IMR-90 (cell line): ENCODE measurements at regions of chr21 and their contacts with region 1.

Region 1: DNA sequence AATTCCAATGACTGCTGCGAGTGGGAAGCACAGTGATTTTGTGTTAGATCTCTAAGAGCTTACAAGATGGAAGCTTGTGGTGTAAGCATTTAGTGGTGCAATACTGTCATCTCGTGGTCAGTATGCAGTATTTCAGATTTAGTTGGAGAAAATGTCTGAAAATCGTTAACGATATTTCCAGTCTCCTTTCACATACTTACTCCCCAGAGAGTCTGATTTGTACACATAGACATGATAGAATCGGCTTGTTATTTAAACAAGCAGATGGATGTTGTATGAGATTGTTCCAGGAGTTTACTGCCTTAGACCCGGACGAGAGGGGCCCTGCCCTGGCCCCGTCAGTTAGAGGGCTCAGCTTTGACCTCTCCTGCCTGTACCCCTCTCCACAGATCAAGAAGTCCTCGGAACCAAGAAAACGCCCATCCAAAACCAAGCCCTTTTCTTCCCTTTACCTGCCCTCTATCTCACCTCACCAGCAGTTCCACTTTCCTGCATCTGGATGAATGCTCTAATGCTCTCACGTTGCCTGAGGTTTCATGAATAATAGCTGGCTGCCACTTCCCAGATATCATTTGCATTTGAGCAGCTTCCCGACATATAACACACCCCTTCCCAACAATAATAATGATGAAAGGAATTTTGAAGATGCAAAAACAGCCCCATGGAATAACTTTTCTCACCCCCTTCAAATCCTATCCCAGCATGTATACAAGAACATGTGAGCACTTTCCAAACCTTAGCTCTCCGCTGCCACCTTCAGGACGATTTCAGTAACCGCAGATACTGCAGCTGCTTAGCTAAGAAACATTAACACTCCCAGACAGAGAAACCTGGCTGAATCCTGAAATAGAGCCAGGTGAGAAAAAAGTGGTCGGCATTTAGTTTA is 247.3 kb downstream of the LTN1 start:
- DNase-seq: peak; percentile 94
- ATAC-seq: peak; percentile 82
- H3K4me3 ChIP-seq: peak overlapping the region; percentile 38; the same call in 1 of the 2 replicates
- H3K27ac ChIP-seq: peak overlapping the region; percentile 93
- H3K4me1 ChIP-seq: peaks cover 6% of the 10 kb centered on the region
- H3K27me3 ChIP-seq: no peaks in the 10 kb centered on the region
- CTCF ChIP-seq: peak; percentile 99
- POLR2A ChIP-seq: peak; percentile 60
- RAD21 ChIP-seq: peak; percentile 100

Region 2: DNA sequence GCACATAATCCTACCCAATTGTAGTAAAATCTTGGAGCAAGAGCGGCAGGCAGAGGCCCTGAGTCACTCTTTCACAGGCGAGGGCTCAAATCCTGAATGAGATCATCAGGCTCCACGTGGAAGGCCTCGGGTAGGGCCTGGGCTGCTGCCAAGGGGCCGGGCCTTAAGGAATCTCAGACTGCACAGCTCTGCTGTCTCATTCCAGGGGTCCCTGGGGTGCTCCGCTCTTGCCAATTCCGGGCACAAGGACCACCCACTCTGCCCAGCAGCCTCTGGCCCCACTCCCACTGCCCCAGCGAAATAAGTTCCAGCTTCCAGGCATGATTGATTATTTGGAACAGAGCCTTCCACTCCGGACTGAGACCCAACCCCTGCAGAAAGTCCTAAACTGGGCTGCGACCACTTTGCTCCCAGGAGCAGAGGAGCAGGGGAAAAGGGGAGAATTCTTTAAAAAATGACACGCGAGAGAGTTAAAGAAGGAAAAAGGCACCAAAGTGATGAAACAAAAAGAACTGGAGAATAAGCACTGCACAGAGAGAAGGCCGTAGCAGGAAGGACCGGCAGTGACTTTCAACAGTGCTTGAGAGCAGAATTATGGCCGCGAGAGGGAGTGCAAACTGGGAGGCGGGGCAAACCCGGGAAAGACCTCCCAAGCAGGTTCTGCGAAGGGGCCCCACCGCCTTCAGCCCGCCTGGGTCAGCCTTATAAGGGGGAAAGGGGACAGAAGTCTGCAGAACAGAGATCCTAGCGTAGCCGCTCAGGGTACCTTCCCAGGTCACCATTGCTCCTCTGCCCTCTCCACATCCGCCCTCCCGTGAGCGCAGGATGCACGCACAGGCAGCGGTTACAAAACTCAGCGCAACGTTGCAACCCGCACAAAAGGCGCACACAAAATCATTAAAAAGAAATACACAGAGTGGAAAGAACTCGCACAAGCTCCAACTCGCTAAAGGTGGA is 1902.1 kb before region 1 on chr21:
- CTCF ChIA-PET with region 1: no interaction called
- POLR2A ChIA-PET with region 1: interaction called, 3 read pairs
- dilution Hi-C with region 1: no loop called
- in situ Hi-C with region 1: loop called (anchors 5 kb)
- intact Hi-C with region 1: no loop called
- DNase-seq: peak; percentile 96
- ATAC-seq: peak; percentile 7
- H3K4me3 ChIP-seq: peak overlapping the region; percentile 97
- H3K27ac ChIP-seq: peak overlapping the region; percentile 89
- H3K4me1 ChIP-seq: peaks cover 6% of the 10 kb centered on the region
- H3K27me3 ChIP-seq: no peaks in the 10 kb centered on the region
- CTCF ChIP-seq: no peak
- POLR2A ChIP-seq: peak; percentile 50; the same call in 1 of the 2 replicates
- RAD21 ChIP-seq: 0 out of 2 replicates have a peak, but pooled peaks have one; percentile 11

Region 3: DNA sequence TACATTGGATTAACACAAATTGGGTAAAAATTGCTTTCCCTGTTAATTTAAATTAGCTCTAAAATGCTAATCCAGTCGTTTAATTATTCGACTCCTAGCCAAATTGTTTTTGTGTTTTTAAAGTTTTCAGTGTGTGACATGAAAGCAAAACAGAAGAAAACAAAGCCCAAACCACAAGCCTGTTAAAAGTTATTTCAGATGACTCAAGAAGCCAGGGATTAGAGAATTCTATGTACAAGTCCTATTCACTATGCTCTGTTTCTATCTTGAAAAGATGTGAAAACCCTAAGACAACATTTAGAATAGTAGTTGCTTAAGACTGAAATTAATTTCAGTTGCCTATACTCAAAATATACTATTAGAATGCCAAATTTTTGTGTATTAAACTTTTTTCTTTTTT is 1483.7 kb before region 1 on chr21:
- CTCF ChIA-PET with region 1: no interaction called
- POLR2A ChIA-PET with region 1: no interaction called
- dilution Hi-C with region 1: no loop called
- in situ Hi-C with region 1: no loop called
- intact Hi-C with region 1: no loop called
- DNase-seq: no peak
- ATAC-seq: no peak
- H3K4me3 ChIP-seq: no peak overlapping the region
- H3K27ac ChIP-seq: no peak overlapping the region
- H3K4me1 ChIP-seq: no peaks in the 10 kb centered on the region
- H3K27me3 ChIP-seq: no peaks in the 10 kb centered on the region
- CTCF ChIP-seq: no peak
- POLR2A ChIP-seq: no peak
- RAD21 ChIP-seq: no peak

Region 4: DNA sequence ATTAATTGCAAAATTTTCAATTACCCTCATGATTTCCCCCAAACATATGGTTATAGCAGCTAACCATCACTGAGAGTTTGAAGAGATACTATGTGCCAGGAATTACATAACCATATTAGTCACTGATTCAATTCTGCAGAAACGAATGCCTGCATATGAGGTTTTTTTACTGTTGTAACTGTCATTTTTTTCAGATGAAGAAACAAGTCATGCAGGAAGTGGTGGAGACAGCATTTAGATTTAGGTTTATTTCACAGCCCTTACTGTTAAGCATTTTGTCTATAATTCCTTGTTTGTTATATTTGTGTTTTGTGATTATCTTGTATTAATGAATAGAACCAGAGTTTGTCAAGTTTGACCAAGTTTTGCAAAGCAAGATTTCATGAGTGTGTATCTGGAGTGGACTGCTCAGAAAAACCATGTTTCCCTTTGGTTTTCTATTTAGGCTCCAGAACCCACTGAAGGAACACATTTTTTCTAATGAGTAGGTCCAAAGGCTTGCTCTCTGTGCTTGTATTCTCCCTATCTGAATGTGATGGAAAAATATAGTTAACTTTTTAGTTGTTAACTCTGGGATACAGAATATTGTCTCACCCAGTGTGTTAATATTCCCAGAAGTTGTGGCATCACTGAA is 1470.0 kb before region 1 on chr21:
- CTCF ChIA-PET with region 1: no interaction called
- POLR2A ChIA-PET with region 1: no interaction called
- dilution Hi-C with region 1: no loop called
- in situ Hi-C with region 1: no loop called
- intact Hi-C with region 1: loop called (anchors 10 kb)
- DNase-seq: peak; percentile 88
- ATAC-seq: peak; percentile 61
- H3K4me3 ChIP-seq: no peak overlapping the region
- H3K27ac ChIP-seq: 0 out of 2 replicates have a peak overlapping the region, but pooled peaks have one; percentile 37
- H3K4me1 ChIP-seq: peaks cover 10% of the 10 kb centered on the region
- H3K27me3 ChIP-seq: no peaks in the 10 kb centered on the region
- CTCF ChIP-seq: no peak
- POLR2A ChIP-seq: no peak
- RAD21 ChIP-seq: no peak

Region 5: DNA sequence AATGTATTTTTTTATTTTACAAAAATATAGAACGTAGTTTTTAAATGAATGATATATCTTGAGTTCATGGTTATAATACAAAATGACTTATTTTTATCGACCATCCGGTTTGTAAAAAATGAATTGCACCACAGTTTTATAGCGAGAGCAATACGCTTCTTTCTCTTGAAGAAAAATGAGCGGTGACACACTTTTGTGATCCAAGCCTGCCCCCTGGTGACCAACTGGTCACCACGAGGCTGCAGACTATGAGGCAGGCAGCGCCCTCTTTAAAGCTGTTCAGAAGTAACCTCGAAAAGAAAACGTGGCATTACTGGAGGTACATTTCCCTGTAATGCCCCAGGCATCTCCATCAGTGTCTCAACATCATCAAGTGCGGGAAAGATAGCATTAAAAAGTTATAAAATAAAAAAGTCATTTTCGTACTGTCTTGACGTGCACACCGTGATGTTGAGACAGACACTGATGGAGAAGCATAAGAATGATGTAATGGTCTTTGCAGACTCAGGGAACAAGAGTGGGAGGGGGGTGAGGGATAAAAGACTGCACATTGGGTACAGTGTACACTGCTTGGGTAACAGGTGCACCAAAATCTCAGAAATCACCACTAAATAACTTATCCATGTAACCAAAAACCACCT is 1044.3 kb before region 1 on chr21:
- CTCF ChIA-PET with region 1: interaction called, 11 read pairs
- POLR2A ChIA-PET with region 1: no interaction called
- dilution Hi-C with region 1: no loop called
- in situ Hi-C with region 1: loop called (anchors 5 kb)
- intact Hi-C with region 1: loop called (anchors 1 kb)
- DNase-seq: peak; percentile 88
- ATAC-seq: peak; percentile 96
- H3K4me3 ChIP-seq: no peak overlapping the region
- H3K27ac ChIP-seq: no peak overlapping the region
- H3K4me1 ChIP-seq: no peaks in the 10 kb centered on the region
- H3K27me3 ChIP-seq: no peaks in the 10 kb centered on the region
- CTCF ChIP-seq: peak; percentile 98
- POLR2A ChIP-seq: peak; percentile 53; the same call in 1 of the 2 replicates
- RAD21 ChIP-seq: peak; percentile 99

Region 6: GRCh38 chr21:28135646-28136045 is 609.7 kb before region 1 on chr21:
- CTCF ChIA-PET with region 1: no interaction called
- POLR2A ChIA-PET with region 1: no interaction called
- dilution Hi-C with region 1: no loop called
- in situ Hi-C with region 1: no loop called
- intact Hi-C with region 1: loop called (anchors 10 kb)
- DNase-seq: no peak
- ATAC-seq: no peak
- H3K4me3 ChIP-seq: no peak overlapping the region
- H3K27ac ChIP-seq: no peak overlapping the region
- H3K4me1 ChIP-seq: peaks cover 2% of the 10 kb centered on the region; the same call in 1 of the 2 replicates
- H3K27me3 ChIP-seq: no peaks in the 10 kb centered on the region
- CTCF ChIP-seq: no peak
- POLR2A ChIP-seq: no peak
- RAD21 ChIP-seq: no peak

Region 7: GRCh38 chr21:28522014-28522799 is 223.2 kb before region 1 on chr21:
- CTCF ChIA-PET with region 1: interaction called, 4 read pairs
- POLR2A ChIA-PET with region 1: no interaction called
- dilution Hi-C with region 1: no loop called
- in situ Hi-C with region 1: no loop called
- intact Hi-C with region 1: loop called (anchors 2 kb)
- DNase-seq: peak; percentile 79
- ATAC-seq: peak; percentile 90
- H3K4me3 ChIP-seq: no peak overlapping the region
- H3K27ac ChIP-seq: peak overlapping the region; percentile 54; the same call in 1 of the 2 replicates
- H3K4me1 ChIP-seq: peaks cover 2% of the 10 kb centered on the region
- H3K27me3 ChIP-seq: no peaks in the 10 kb centered on the region
- CTCF ChIP-seq: peak; percentile 71
- POLR2A ChIP-seq: no peak
- RAD21 ChIP-seq: peak; percentile 82

Region 8: DNA sequence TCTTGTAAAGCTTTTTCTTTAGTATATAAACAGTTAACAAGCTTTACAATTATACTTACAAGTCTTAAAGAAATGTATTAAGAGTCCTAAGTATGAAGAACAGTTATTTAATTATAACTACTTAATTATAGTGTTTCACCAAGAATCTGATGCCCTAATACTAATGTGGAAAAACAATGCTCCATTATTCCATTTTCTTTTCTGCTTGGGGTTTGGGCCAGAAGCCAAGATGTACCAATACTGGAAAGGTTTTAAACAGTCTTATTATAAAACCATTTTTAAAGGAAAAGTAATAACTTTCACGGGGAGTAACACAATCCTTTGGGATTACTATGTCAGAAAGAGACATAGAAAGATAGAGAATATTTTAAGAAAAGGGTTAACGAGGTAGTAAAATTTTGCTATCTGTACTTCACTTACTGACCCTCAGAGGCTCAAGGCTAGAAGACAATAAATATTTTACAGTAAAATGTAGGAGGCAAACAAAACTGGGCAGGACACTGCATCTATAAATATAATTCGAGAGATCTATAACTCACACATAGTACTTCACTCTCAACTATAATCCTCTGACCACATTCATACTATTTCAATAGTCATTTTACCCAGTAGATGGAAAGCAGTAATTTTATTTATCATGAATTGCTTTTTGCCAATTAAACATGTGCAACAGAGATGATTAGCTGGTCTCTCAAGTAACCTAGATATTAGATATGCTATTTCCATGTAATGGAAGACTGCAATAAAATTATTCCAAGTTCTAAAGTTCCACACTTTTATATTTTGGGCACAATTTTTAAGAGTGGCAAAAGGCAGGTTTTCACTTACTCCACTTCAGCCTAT is 183.4 kb after region 1 on chr21:
- CTCF ChIA-PET with region 1: no interaction called
- POLR2A ChIA-PET with region 1: no interaction called
- dilution Hi-C with region 1: no loop called
- in situ Hi-C with region 1: no loop called
- intact Hi-C with region 1: no loop called
- DNase-seq: no peak
- ATAC-seq: no peak
- H3K4me3 ChIP-seq: no peak overlapping the region
- H3K27ac ChIP-seq: no peak overlapping the region
- H3K4me1 ChIP-seq: no peaks in the 10 kb centered on the region
- H3K27me3 ChIP-seq: no peaks in the 10 kb centered on the region
- CTCF ChIP-seq: no peak
- POLR2A ChIP-seq: no peak
- RAD21 ChIP-seq: no peak

Region 9: DNA sequence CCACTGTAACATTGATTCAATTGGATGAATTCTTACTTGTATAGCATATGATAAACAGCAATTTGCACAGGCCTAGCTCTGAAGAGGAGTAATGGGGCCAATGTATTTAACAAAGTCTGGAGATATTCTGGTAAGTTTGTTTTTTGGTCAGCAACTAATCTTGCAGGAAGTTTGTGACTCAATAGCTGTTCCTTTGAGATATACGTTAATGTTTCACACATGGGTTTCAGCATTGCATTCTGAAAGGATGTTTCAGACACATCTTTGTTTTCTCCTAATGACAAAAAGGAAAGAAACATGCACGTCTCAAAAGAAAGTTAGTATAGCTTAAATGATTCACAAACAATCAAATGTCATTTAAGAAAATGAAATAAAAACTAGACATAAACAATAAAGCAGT is 198.3 kb after region 1 on chr21:
- CTCF ChIA-PET with region 1: interaction called, 9 read pairs
- POLR2A ChIA-PET with region 1: interaction called, 4 read pairs
- dilution Hi-C with region 1: no loop called
- in situ Hi-C with region 1: no loop called
- intact Hi-C with region 1: loop called (anchors 1 kb)
- DNase-seq: peak; percentile 28
- ATAC-seq: no peak; the same call in 1 of the 2 replicates
- H3K4me3 ChIP-seq: no peak overlapping the region
- H3K27ac ChIP-seq: no peak overlapping the region
- H3K4me1 ChIP-seq: no peaks in the 10 kb centered on the region
- H3K27me3 ChIP-seq: no peaks in the 10 kb centered on the region
- CTCF ChIP-seq: no peak
- POLR2A ChIP-seq: no peak
- RAD21 ChIP-seq: no peak